Activated T-helper 1 cell treated with anti-CD3 and anti-CD28 coated beads, Interleukin-12 subunit alpha, Interleukin-12 subunit beta, Interleukin-2, Interleukin-4 antibody, amounts not matched to agents 30 ng/mL and 10 ng/mL and 1 ng/mL, durations not matched to agents 14 hours and 24 hours and 36 hours (primary cell): ENCODE measurements at regions of chr16 and their contacts with region 1.

Region 1: GRCh38 chr16:4183237-4184036 is 58.4 kb downstream of the SRL start:
- DNase-seq: peak; percentile 92
- H3K4me3 Mint-ChIP-seq: peak overlapping the region; percentile 80
- H3K27ac Mint-ChIP-seq: peak overlapping the region; percentile 80
- H3K4me1 Mint-ChIP-seq: peaks cover 5% of the 10 kb centered on the region
- H3K27me3 Mint-ChIP-seq: peaks cover 12% of the 10 kb centered on the region

Region 2: DNA sequence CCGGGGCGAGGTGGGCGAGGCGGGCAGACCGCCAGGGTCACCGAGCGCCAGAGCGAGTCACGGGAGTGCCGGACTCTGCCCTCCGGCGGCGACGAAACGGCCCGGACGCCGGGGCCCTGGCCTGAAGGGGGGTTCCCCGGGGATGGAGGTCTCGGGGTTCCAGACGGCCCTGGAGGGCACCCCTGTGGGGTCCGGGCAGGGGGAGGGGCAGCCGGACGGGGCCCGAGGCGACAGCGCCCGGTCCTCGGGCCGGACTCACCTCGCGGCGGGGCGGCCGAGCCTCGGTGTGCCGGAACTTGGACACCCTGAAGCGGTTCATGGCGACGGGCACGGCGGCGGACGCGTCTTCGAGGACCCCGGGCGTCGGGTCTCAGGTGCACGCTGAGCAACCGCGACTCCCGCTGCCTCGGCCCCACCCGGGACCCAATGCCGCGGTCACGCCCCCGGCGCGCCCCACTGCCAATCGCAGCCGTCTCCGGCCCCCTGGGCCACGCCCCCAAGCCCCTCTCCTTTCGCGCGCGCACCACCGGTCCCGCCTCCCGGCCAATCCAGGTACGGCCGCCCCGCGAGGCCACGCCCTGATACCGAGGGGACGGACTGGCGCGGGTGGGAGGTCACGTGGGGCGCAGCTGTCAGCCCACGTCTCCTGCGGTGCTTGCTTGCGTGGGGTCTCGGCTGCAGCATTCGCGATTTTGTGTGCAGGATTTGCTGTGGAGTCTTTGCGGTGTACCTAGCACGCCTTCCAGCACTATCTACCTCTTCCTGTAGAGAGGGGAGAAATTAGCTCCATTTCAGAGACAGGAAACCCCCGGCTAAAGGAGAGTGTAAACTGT is 233.0 kb after region 1 on chr16 and contains the start of gene CORO7:
- intact Hi-C with region 1: loop called (anchors 5 kb)
- DNase-seq: peak; percentile 99
- H3K4me3 Mint-ChIP-seq: peak within 1 kb of the TSS; percentile 90
- H3K27ac Mint-ChIP-seq: peak within 1 kb of the TSS; percentile 92
- H3K4me1 Mint-ChIP-seq: peaks cover 16% of the 10 kb centered on the region
- H3K27me3 Mint-ChIP-seq: peaks cover 7% of the 10 kb centered on the region
- total RNA-seq, gene CORO7: 87.9 and 90.8 TPM in 2 replicates